ENCODE measurements at regions of chr2 and their contacts with region 1.

Region 1: DNA sequence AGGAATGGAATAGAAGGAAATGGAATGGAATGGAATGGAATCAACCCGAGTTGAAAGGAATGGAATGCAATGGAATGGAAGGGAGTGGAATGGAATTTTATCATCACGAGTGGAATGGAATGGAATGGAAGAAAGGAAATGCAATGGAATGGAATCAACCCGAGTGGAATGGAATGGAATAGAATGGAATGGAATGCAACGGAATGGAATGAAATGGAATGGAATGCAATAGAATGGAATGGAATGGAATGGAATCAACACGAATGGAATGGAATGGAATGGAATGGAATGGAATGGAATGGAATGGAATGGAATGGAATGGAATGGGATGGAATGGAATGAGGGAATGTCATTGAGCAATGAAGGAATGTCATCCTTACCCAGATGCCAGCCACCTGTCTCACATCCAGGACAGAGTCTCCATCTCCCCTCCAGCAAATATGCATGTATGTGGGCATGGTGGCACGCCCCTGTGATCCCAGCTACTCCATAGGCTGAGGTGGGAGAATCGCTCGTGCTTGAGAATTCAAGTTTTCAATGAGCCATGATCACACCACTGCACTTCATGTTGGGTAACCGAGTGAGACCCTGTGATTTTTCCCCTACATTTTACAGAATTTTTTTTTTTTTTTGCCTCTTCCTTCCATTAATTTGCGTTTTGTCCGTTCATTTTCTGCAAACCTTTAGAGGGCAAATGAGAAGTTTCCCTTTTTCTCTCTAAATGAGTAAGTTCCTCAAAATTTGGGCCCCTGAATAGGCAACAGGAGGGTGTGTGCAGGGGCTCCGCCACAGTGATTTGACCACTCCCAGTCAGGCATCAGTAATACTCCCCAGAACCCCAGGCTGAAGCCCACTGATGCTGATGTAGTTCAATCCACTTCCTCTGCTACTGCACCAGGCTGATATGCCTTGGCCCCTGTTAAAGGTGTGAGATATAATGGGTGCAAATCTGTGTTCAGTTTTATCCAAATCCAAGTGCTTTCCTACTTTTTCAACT is 1149.7 kb downstream of the RPIA start:
- DNase-seq: peak; percentile 63
- ATAC-seq: peak; percentile 58

Region 2: DNA sequence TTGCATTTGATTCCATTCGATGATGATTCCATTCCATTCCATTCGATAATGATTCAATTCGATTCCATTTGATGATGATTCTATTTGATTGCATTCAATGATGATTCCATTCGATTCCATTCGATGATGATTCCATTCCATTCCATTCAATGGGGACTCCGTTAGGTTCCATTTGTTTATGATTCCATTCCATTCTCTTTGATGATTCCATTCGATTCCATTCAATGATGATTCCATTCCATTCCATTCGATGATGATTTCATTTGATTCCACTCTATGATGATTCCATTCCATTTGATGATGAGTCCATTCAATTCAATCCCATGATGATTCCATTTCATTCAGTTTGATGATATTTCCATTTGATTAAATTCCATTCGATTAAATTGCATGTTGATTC is 40.7 kb before region 1 on chr2:
- intact Hi-C with region 1: no loop called
- DNase-seq: no peak
- ATAC-seq: no peak

Region 3: GRCh38 chr2:89829828-89830227 is 11.3 kb before region 1 on chr2:
- intact Hi-C with region 1: loop called (anchors 1 kb)
- DNase-seq: no peak
- ATAC-seq: no peak